AG04449 (cell line): ENCODE measurements at regions of chr19 and their contacts with region 1.

Region 1: GRCh38 chr19:45485305-45486077 is 11.4 kb downstream of the RTN2 start:
- DNase-seq: no peak
- H3K4me3 ChIP-seq: peak overlapping the region; percentile 83
- CTCF ChIP-seq: peak; percentile 93

Region 2: DNA sequence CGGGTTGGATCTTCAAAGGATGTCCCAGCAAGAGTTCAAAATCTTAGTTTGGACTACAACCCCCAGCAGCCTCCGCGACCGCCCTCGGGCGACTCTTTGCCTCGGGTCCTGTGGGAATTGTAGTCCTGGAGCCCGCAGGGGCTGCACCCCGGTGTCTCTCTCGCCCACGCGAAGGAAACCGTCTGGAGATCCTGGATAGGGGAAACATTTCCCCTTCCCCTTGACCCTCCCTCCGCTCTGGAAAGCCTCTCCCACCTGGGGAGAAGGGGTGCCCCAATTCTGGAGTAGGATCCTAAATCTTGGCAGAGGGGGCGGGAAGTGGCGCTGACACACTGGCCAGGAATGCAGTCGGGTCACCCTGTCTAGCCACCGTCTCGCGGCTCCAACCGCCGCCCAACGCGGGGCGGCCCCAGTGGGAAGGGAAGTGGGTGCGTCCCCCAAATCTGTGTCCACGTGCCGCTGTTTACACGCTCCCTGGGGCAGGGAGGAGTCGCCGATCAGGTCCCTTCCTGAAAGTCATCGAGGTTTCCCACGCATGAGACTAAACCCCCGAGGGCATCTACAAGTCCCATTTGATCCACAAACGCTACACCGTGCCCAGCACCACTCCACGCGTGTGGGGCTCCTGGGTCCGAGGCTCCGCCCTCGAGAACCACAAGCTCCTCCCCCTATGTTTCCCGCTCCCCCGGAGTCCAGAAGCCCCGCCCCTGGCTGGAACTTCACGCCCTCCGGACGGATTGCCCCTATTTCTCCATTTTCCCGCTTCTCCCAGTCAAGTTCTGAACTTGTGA is 79.9 kb before region 1 on chr19:
- CTCF ChIA-PET with region 1: interaction called, 65 read pairs
- POLR2A ChIA-PET with region 1: interaction called, 3 read pairs
- DNase-seq: no peak
- H3K4me3 ChIP-seq: peak overlapping the region; percentile 88
- CTCF ChIP-seq: no peak

Region 3: GRCh38 chr19:45423589-45424190 is 61.8 kb before region 1 on chr19 and contains the start of gene ERCC1:
- CTCF ChIA-PET with region 1: interaction called, 197 read pairs
- POLR2A ChIA-PET with region 1: no interaction called
- DNase-seq: no peak
- H3K4me3 ChIP-seq: peak within 1 kb of the TSS; percentile 82
- CTCF ChIP-seq: no peak

Region 4: GRCh38 chr19:45469132-45469944 is 16.2 kb before region 1 on chr19:
- CTCF ChIA-PET with region 1: interaction called, 49 read pairs
- POLR2A ChIA-PET with region 1: no interaction called
- DNase-seq: no peak
- H3K4me3 ChIP-seq: peak overlapping the region; percentile 95
- CTCF ChIP-seq: peak; percentile 0

Region 5: DNA sequence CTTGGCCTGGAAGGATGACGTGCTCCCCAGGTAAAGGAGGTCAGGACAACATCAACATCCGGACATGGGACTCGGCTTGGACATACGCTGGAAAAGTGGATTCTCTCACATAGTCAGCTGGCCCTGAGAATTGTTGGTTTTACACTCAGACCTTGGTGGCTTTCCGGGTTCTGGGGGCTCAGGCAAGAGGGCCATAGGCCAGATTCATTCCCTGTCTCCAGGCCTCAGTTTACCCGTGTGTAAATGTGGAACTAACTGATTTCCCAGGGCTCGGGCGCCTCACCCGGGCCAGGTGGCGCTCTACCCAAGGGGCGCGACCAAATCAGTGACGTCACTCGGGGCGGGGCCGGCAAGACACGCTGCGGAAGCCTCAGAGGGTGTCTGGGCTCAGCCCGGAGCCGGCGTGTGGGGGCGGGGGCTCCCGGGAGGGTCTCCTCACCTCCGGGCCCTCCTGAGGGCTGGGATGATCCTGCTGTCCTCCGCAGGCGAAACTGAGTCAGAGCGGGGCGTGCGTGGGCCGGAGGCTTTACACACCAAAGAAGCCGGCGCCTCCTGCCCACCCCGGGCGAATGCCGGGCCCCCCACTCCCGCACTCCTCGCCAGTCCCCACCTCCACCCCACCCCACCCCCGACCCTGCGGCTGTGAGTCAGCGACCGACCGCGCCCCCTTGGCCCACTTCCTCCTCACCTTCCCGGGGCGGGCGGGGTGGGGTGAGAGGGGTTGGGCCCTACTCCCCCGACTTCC is 20.9 kb after region 1 on chr19:
- CTCF ChIA-PET with region 1: interaction called, 60 read pairs
- POLR2A ChIA-PET with region 1: no interaction called
- DNase-seq: no peak
- H3K4me3 ChIP-seq: peak overlapping the region; percentile 82
- CTCF ChIP-seq: peak; percentile 70

Region 6: GRCh38 chr19:45607071-45608029 is 121.9 kb after region 1 on chr19:
- CTCF ChIA-PET with region 1: no interaction called
- POLR2A ChIA-PET with region 1: no interaction called
- DNase-seq: no peak
- H3K4me3 ChIP-seq: peak overlapping the region; percentile 40
- CTCF ChIP-seq: peak; percentile 91

Region 7: GRCh38 chr19:45885556-45886426 is 400.3 kb after region 1 on chr19 and contains the start of gene IRF2BP1:
- CTCF ChIA-PET with region 1: no interaction called
- POLR2A ChIA-PET with region 1: no interaction called
- DNase-seq: peak; percentile 41
- H3K4me3 ChIP-seq: peak within 1 kb of the TSS; percentile 78
- CTCF ChIP-seq: peak; percentile 12